ENCODE measurements at regions of chr15 and their contacts with region 1.

Region 1: GRCh38 chr15:80058851-80059785 is at the start of gene ZFAND6:
- DNase-seq: peak; percentile 95
- H3K4me3 Mint-ChIP-seq: peak within 1 kb of the TSS; percentile 91
- H3K27ac Mint-ChIP-seq: peak within 1 kb of the TSS; percentile 90
- H3K4me1 Mint-ChIP-seq: peaks cover 35% of the 10 kb centered on the region
- H3K27me3 Mint-ChIP-seq: peaks cover 2% of the 10 kb centered on the region
- total RNA-seq, gene ZFAND6: 43.3 and 50.3 TPM in 2 replicates

Region 2: GRCh38 chr15:79339564-79340314 is 719.4 kb before region 1 on chr15:
- intact Hi-C with region 1: no loop called
- DNase-seq: no peak
- H3K4me3 Mint-ChIP-seq: no peak overlapping the region
- H3K27ac Mint-ChIP-seq: no peak overlapping the region
- H3K4me1 Mint-ChIP-seq: no peaks in the 10 kb centered on the region
- H3K27me3 Mint-ChIP-seq: no peaks in the 10 kb centered on the region

Region 3: GRCh38 chr15:79923515-79924395 is 135.4 kb before region 1 on chr15:
- intact Hi-C with region 1: loop called (anchors 1 kb)
- DNase-seq: peak; percentile 99
- H3K4me3 Mint-ChIP-seq: peak overlapping the region; percentile 92
- H3K27ac Mint-ChIP-seq: peak overlapping the region; percentile 95
- H3K4me1 Mint-ChIP-seq: peaks cover 16% of the 10 kb centered on the region
- H3K27me3 Mint-ChIP-seq: no peaks in the 10 kb centered on the region

Region 4: GRCh38 chr15:80010131-80010673 is 48.9 kb before region 1 on chr15:
- intact Hi-C with region 1: loop called (anchors 5 kb)
- DNase-seq: no peak
- H3K4me3 Mint-ChIP-seq: no peak overlapping the region
- H3K27ac Mint-ChIP-seq: no peak overlapping the region
- H3K4me1 Mint-ChIP-seq: no peaks in the 10 kb centered on the region
- H3K27me3 Mint-ChIP-seq: no peaks in the 10 kb centered on the region

Region 5: GRCh38 chr15:80072285-80072994 is 13.3 kb after region 1 on chr15:
- intact Hi-C with region 1: loop called (anchors 1 kb)
- DNase-seq: peak; percentile 14
- H3K4me3 Mint-ChIP-seq: peak overlapping the region; percentile 84
- H3K27ac Mint-ChIP-seq: no peak overlapping the region
- H3K4me1 Mint-ChIP-seq: peaks cover 45% of the 10 kb centered on the region
- H3K27me3 Mint-ChIP-seq: no peaks in the 10 kb centered on the region

Region 6: DNA sequence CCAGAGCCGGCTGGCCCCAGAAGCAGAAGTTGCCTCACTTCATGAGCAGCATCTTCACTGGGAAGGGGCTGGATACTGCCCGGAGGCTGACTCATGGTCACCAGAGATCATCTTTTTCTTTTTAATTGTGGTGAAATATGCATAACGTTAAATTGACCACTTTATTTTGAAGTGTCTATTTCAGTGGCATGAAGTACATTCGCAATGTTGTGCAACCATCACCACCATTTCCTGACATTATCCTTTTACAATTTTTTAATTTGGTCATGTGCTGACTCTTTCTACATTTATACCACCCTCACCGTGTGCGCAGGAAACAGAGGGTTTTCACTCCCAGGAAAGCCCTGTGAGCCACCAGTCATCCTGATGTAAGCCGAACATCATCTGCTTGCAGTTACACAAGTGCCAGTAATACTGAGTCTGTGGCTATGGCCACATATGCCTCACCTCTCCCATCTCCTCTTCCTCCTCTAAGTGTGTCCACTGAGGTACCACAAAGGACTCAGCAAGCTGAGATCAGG is 584.4 kb after region 1 on chr15:
- intact Hi-C with region 1: no loop called
- DNase-seq: no peak
- H3K4me3 Mint-ChIP-seq: no peak overlapping the region
- H3K27ac Mint-ChIP-seq: no peak overlapping the region
- H3K4me1 Mint-ChIP-seq: peaks cover 5% of the 10 kb centered on the region
- H3K27me3 Mint-ChIP-seq: no peaks in the 10 kb centered on the region

Measured in activated T-helper 1 cell treated with anti-CD3 and anti-CD28 coated beads, Interleukin-12 subunit alpha, Interleukin-12 subunit beta, Interleukin-2, Interleukin-4 antibody, amounts not matched to agents 30 ng/mL and 10 ng/mL and 1 ng/mL, durations not matched to agents 14 hours and 24 hours and 36 hours (primary cell).